ENCODE measurements at regions of chr1 and their contacts with region 1.

Region 1: DNA sequence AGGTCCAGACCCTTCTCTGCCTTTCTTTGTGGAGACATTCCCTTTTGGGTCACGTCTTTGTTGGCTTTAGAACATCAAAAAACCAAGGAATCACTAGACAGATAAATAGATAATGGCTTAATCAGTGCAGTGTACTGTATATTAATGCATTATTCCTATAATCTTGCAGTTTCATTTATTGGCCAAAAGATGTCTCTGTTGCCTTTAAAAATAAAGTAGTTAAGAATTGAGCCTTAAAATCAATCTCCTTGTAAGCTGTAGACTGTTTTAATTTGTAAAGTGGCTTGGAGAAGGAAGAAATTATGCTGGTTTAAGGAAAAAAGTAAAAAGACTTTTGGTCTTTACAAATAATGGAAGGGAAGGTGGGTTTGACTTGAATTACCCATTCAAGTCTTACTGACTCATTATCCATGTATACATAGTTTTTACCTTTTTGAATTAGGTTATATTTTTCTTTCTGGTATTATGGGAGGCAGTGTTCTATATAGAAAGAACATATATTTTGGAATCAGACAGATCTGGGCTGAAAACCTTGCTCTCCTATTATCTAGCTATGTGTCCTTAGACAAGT is 84.6 kb downstream of the VPS13D start:
- DNase-seq: no peak
- H3K4me3 ChIP-seq: no peak overlapping the region
- H3K27ac ChIP-seq: no peak overlapping the region
- H3K4me1 ChIP-seq: no peaks in the 10 kb centered on the region
- H3K27me3 ChIP-seq: no peaks in the 10 kb centered on the region
- CTCF ChIP-seq: peak; percentile 28 to 47 (median 44)
- POLR2A ChIP-seq: no peak

Region 2: DNA sequence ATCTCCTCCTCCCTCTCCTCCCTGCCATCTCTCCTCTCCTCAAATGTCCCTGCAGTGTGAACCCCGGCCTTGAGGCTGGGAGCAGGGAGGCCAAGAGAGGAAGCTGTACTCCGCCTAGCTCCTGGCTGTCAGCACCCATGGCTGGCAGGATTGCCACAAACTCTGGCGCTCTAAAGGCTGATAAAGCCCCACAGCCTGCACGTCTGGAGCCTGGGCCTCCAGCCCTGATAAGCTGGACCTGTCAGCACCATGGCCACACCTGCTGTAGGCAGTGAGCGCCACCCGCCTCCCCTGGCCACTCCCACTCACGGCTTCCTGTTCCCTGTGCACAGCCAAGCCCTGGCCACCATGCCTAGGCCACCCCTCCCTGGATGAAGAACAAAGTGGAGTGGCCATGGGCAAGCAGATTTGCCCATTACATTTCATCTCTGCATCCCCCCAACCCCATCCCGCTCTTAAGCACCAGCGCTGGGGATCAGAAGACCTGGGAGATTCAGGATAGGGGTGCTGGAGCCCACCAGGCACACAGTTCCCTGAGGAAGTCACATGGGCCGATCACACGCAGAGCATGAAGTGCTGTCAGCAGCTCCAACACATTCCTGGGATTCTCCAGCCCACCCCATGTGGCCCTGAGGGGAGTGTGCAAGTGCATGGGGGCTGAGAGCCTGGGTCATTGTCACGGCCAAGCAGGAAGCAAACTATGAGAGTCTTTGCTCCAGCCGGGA is 431.4 kb before region 1 on chr1:
- intact Hi-C with region 1: no loop called
- DNase-seq: no peak
- H3K4me3 ChIP-seq: no peak overlapping the region
- H3K27ac ChIP-seq: no peak overlapping the region
- H3K4me1 ChIP-seq: no peaks in the 10 kb centered on the region
- H3K27me3 ChIP-seq: no peaks in the 10 kb centered on the region
- CTCF ChIP-seq: no peak
- POLR2A ChIP-seq: no peak

Region 3: GRCh38 chr1:12658531-12659453 is 344.4 kb after region 1 on chr1:
- intact Hi-C with region 1: loop called (anchors 10 kb)
- DNase-seq: peak; percentile 68 to 72
- H3K4me3 ChIP-seq: no peak overlapping the region
- H3K27ac ChIP-seq: no peak overlapping the region
- H3K4me1 ChIP-seq: no peaks in the 10 kb centered on the region
- H3K27me3 ChIP-seq: no peaks in the 10 kb centered on the region
- CTCF ChIP-seq: peak; percentile 87 to 95 (median 90)
- POLR2A ChIP-seq: no peak